Activated CD4-positive, alpha-beta T cell treated with anti-CD3 and anti-CD28 coated beads for 36 hours (primary cell): ENCODE measurements at regions of chr17 and their contacts with region 1.

Region 1: GRCh38 chr17:44324571-44325275 is at the start of gene SLC25A39:
- DNase-seq: peak; percentile 97
- ATAC-seq: peak; percentile 74
- H3K4me3 Mint-ChIP-seq: peak within 1 kb of the TSS; percentile 84
- H3K27ac Mint-ChIP-seq: peak within 1 kb of the TSS; percentile 94
- H3K4me1 Mint-ChIP-seq: peaks cover 21% of the 10 kb centered on the region
- H3K27me3 Mint-ChIP-seq: no peaks in the 10 kb centered on the region
- total RNA-seq, gene SLC25A39: 127 to 129 TPM

Region 2: DNA sequence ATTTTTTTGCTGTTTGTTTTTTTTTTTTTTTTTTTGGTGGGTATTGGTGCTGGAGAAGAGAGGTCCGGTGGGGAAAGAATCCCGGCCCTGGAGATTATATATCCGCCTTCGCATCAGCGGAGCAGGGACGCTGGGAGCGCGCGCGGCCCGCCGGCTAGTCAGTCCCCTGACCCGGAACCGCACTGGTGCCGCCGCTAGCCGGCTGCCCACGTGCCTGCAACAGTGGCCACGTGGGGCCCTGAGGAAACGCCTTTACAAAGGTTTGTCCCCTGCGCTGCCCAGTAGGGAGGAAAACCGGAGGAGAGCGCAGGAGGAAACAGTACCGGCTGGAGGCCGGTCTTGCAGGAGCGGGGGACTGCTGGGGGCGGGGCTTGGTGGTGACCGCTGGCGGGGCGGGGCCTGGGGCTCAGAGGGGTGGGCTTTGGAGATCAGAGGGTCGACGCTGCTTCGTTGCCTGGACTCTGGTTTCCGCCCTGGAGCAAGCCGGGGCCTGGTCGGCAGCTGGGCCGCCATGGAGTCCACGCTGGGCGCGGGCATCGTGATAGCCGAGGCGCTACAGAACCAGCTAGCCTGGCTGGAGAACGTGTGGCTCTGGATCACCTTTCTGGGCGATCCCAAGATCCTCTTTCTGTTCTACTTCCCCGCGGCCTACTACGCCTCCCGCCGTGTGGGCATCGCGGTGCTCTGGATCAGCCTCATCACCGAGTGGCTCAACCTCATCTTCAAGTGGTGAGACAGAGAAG is 254.1 kb before region 1 on chr17 and contains the start of gene G6PC3:
- CTCF ChIA-PET with region 1: no interaction called
- POLR2A ChIA-PET with region 1: no interaction called
- intact Hi-C with region 1: loop called in 1 of 2 experiments (anchors 1 kb)
- DNase-seq: peak; percentile 93
- ATAC-seq: peak; percentile 68
- H3K4me3 Mint-ChIP-seq: peak within 1 kb of the TSS; percentile 93
- H3K27ac Mint-ChIP-seq: peak within 1 kb of the TSS; percentile 98
- H3K4me1 Mint-ChIP-seq: peaks cover 30% of the 10 kb centered on the region
- H3K27me3 Mint-ChIP-seq: no peaks in the 10 kb centered on the region
- total RNA-seq, gene G6PC3: 21.3 to 22.0 TPM

Region 3: GRCh38 chr17:44141717-44142285 is 182.9 kb before region 1 on chr17 and contains the start of gene HROB:
- CTCF ChIA-PET with region 1: no interaction called
- POLR2A ChIA-PET with region 1: no interaction called
- intact Hi-C with region 1: loop called in 1 of 2 experiments (anchors 1 kb)
- DNase-seq: peak; percentile 99
- ATAC-seq: peak; percentile 83
- H3K4me3 Mint-ChIP-seq: peak within 1 kb of the TSS; percentile 91
- H3K27ac Mint-ChIP-seq: peak within 1 kb of the TSS; percentile 85
- H3K4me1 Mint-ChIP-seq: peaks cover 24% of the 10 kb centered on the region
- H3K27me3 Mint-ChIP-seq: peaks cover 2% of the 10 kb centered on the region
- total RNA-seq, gene HROB: 17.1 to 23.3 TPM

Region 4: GRCh38 chr17:44210342-44211192 is 114.2 kb before region 1 on chr17:
- CTCF ChIA-PET with region 1: interaction called, 16 read pairs
- POLR2A ChIA-PET with region 1: interaction called, 4 read pairs
- intact Hi-C with region 1: loop called (anchors 1 to 2 kb)
- DNase-seq: peak; percentile 96
- ATAC-seq: peak; percentile 84
- H3K4me3 Mint-ChIP-seq: peak overlapping the region; percentile 79
- H3K27ac Mint-ChIP-seq: peak overlapping the region; percentile 98
- H3K4me1 Mint-ChIP-seq: peaks cover 60% of the 10 kb centered on the region
- H3K27me3 Mint-ChIP-seq: no peaks in the 10 kb centered on the region

Region 5: DNA sequence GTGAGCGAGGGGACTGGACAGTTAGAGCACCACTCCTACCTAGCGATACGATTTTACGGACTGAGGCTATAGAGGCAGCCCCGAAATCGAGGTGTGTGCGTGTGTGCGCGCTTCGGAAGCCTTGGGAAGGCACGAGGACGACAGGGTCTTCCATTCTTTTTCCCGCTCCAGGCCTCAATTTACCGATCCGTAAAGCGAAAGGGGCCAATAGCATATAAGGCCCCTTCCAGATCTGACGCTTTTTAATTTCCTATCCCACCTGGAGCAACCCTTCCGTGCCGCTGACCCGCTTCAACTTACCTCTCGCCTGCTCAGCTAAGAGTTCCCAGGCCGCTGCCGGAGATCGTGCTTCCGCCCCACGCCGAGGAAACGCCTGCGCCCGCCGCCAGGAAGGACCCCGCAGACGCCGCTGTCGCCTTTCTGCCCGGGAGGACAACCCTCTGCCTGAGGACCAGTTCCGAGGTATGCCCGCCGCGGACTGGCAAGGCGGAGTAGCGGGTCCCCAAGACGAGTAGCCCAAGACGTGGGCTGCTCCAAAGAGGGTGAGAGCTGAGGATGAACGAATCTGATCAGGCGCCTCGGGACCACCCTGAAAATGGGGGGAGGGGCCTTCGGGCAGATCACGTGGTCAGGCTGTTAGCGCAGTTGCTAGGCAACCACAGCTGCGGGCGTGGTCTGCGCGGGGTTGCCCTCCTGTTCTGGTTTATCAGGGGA is 574.5 kb after region 1 on chr17 and contains the start of gene EFTUD2:
- CTCF ChIA-PET with region 1: no interaction called
- POLR2A ChIA-PET with region 1: no interaction called
- intact Hi-C with region 1: loop called in 1 of 2 experiments (anchors 5 kb)
- DNase-seq: peak; percentile 95
- ATAC-seq: peak; percentile 94
- H3K4me3 Mint-ChIP-seq: peak within 1 kb of the TSS; percentile 98
- H3K27ac Mint-ChIP-seq: peak within 1 kb of the TSS; percentile 98
- H3K4me1 Mint-ChIP-seq: peaks cover 26% of the 10 kb centered on the region
- H3K27me3 Mint-ChIP-seq: no peaks in the 10 kb centered on the region
- total RNA-seq, gene EFTUD2: 175 to 203 TPM